Activated CD4-positive, alpha-beta T cell treated with anti-CD3 and anti-CD28 coated beads, Interleukin-2, amount 10 ng/mL, durations not matched to agents 7 days and 5 days (primary cell): ENCODE measurements at regions of chr3 and their contacts with region 1.

Region 1: DNA sequence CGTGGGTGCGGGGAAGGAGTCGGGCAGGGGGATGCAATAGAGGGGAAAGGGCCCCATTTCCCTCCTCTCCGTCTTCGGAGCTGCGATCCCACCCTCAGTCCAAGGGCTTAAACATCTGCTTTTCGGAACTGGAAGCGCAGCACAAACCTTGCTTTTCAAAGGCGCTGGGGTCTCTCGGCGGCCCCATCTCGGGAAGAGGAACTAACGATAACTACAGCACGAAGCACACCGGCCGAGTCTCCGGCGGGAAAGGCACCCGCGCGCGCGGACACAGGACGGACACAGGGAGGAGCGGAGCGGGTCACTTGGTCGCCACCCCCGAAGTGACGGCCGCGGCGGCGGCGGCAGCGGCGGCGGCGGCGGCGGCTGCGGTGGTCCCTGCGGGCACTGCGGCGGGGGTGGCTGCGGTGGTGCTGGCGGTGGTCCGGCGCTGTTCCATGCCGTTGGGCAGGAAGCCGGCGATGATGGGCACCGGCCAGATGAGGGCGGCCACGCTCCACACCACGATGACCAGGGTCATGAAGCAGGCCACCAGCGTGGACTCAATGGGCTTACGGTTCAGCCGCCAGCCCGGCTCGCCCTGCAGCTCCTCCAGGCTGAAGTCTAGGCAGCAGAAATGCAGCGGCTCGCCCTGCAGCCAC is 1.1 kb downstream of the TMEM158 start:
- DNase-seq: peak; percentile 18
- H3K4me3 Mint-ChIP-seq: peak overlapping the region; percentile 72
- H3K27ac Mint-ChIP-seq: peak overlapping the region; percentile 42
- H3K4me1 Mint-ChIP-seq: peaks cover 12% of the 10 kb centered on the region
- H3K27me3 Mint-ChIP-seq: peaks cover 75% of the 10 kb centered on the region

Region 2: GRCh38 chr3:44890852-44891251 is 334.1 kb before region 1 on chr3:
- CTCF ChIA-PET with region 1: no interaction called
- POLR2A ChIA-PET with region 1: interaction called, 11 read pairs
- DNase-seq: no peak
- H3K4me3 Mint-ChIP-seq: no peak overlapping the region
- H3K27ac Mint-ChIP-seq: no peak overlapping the region
- H3K4me1 Mint-ChIP-seq: no peaks in the 10 kb centered on the region
- H3K27me3 Mint-ChIP-seq: no peaks in the 10 kb centered on the region

Region 3: GRCh38 chr3:45043728-45044299 is 181.1 kb before region 1 on chr3:
- CTCF ChIA-PET with region 1: interaction called, 29 read pairs
- POLR2A ChIA-PET with region 1: no interaction called
- DNase-seq: no peak
- H3K4me3 Mint-ChIP-seq: no peak overlapping the region
- H3K27ac Mint-ChIP-seq: no peak overlapping the region
- H3K4me1 Mint-ChIP-seq: peaks cover 29% of the 10 kb centered on the region
- H3K27me3 Mint-ChIP-seq: peaks cover 33% of the 10 kb centered on the region

Region 4: GRCh38 chr3:45258317-45258716 is 33.4 kb after region 1 on chr3:
- CTCF ChIA-PET with region 1: no interaction called
- POLR2A ChIA-PET with region 1: no interaction called
- DNase-seq: no peak
- H3K4me3 Mint-ChIP-seq: no peak overlapping the region
- H3K27ac Mint-ChIP-seq: no peak overlapping the region
- H3K4me1 Mint-ChIP-seq: no peaks in the 10 kb centered on the region
- H3K27me3 Mint-ChIP-seq: peaks cover 6% of the 10 kb centered on the region